Activated T-helper 1 cell treated with anti-CD3 and anti-CD28 coated beads, Interleukin-12 subunit alpha, Interleukin-12 subunit beta, Interleukin-2, Interleukin-4 antibody, amounts not matched to agents 30 ng/mL and 10 ng/mL and 1 ng/mL, durations not matched to agents 14 hours and 24 hours and 36 hours (primary cell): ENCODE measurements at regions of chr6 and their contacts with region 1.

Region 1: GRCh38 chr6:11202513-11203305 is 29.8 kb downstream of the NEDD9 start:
- DNase-seq: peak; percentile 43
- H3K4me3 Mint-ChIP-seq: peak overlapping the region; percentile 54
- H3K27ac Mint-ChIP-seq: peak overlapping the region; percentile 92
- H3K4me1 Mint-ChIP-seq: peaks cover 86% of the 10 kb centered on the region
- H3K27me3 Mint-ChIP-seq: no peaks in the 10 kb centered on the region

Region 2: GRCh38 chr6:10759312-10759839 is 443.3 kb before region 1 on chr6:
- intact Hi-C with region 1: no loop called
- DNase-seq: no peak
- H3K4me3 Mint-ChIP-seq: no peak overlapping the region
- H3K27ac Mint-ChIP-seq: peak overlapping the region; percentile 29
- H3K4me1 Mint-ChIP-seq: peaks cover 26% of the 10 kb centered on the region
- H3K27me3 Mint-ChIP-seq: no peaks in the 10 kb centered on the region

Region 3: GRCh38 chr6:10779076-10779475 is 423.6 kb before region 1 on chr6:
- intact Hi-C with region 1: no loop called
- DNase-seq: no peak
- H3K4me3 Mint-ChIP-seq: no peak overlapping the region
- H3K27ac Mint-ChIP-seq: no peak overlapping the region
- H3K4me1 Mint-ChIP-seq: no peaks in the 10 kb centered on the region
- H3K27me3 Mint-ChIP-seq: no peaks in the 10 kb centered on the region

Region 4: DNA sequence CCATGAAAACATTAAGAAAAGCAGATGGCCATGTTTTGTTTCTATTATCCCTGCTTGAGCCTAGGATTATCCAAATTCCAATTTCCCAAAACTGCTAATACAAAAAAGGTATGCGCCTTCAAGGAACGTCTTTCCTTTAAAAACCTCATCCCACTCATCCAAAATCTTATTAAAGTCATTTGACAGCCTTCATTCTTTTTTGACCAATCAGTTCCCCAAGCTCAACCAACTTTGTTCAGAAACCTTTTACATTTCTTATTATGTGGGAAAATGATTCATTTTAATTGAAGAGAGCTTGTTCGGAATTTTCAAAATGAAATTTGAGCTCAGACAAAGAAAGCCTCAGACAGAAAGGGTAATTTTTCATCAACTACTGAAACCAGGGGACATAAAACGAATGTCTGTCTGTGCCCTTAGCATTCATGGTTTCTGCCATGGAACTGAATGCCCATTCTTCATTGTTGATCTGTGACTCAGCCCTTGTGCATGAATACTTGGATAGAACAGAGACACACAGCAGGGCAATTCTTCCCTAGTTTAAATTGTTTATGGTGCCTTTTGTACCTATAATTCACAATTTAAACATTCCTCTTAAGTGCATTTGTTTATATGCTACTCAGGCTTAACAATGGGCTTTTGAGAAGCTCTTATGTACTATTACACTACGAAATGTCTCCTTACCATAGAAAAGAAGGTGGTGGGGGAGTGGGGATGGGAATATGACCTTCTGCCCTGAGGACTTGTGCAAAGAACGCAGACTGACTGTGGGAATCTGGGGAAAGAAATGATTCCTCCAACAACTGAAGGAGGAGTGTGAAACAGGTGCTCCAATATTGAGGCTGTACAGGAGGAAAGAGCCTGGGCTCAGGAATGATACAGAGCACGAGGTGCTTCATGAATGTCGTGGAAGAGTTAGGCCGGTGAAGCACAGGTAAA is 41.4 kb before region 1 on chr6:
- intact Hi-C with region 1: loop called (anchors 5 kb)
- DNase-seq: no peak
- H3K4me3 Mint-ChIP-seq: no peak overlapping the region
- H3K27ac Mint-ChIP-seq: no peak overlapping the region
- H3K4me1 Mint-ChIP-seq: peaks cover 25% of the 10 kb centered on the region
- H3K27me3 Mint-ChIP-seq: peaks cover 7% of the 10 kb centered on the region

Region 5: DNA sequence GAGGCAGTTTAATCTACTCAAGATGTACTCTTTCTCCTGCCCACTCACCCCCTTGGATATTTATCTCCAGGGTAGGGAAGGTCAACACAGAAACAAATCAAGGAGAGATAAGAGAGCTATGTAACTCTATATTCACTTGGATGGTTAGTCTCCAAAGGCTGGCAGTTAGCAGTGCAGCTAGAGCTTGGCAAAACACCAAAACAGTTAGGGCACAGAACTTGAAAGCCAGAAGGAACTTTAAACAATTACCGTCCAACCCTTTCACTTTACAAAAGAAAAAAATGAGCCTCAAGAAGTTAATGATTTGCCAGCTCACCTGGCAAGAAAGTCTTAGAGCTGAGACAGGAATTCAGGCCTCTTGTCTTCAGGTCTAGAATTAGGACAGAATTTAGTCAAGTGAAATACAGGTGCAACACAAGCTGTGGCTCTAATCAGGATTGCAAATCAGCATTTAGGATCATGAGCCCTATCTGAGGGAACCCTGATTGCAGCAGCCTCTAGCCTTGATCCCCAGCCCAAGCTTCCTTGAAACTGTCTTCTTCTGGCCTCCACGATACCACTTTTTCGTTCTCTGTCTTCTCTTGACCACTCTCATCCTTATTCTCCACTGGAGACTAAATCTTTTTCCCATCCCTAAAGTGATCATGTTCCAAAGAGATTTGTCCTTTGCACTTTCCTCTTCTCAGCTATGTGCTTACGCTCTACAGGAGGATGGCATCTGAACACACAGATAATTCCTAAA is 14.8 kb after region 1 on chr6:
- intact Hi-C with region 1: loop called (anchors 1 kb)
- DNase-seq: no peak
- H3K4me3 Mint-ChIP-seq: no peak overlapping the region
- H3K27ac Mint-ChIP-seq: no peak overlapping the region
- H3K4me1 Mint-ChIP-seq: peaks cover 78% of the 10 kb centered on the region
- H3K27me3 Mint-ChIP-seq: no peaks in the 10 kb centered on the region